Thyroid gland (tissue), 4 donors: ENCODE measurements at regions of chr5 and their contacts with region 1.

Region 1: DNA sequence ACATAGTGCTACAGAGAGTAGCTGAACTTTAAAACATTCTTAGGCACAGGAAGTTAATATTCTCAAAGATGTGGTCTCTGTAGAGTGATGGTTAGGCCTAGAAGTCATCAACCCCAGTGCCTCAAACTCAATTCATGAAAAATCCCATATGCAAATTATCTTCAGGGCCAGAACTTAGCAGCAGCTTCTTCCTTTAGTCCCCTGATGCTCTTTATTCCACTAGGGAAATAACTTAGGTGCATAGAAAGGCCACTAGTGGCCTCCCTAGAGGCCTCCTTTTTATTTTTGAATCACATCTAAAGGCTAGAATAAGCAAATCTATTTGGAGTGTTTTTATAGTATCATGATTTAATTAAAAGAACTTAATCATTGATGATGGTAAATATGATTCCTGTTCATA is 88.3 kb downstream of the GIN1 start:
- DNase-seq: no peak
- H3K4me3 ChIP-seq: no peak overlapping the region
- H3K27ac ChIP-seq: no peak overlapping the region
- H3K4me1 ChIP-seq: no peaks in the 10 kb centered on the region
- H3K27me3 ChIP-seq: no peaks in the 10 kb centered on the region
- CTCF ChIP-seq: peak in 1 of 6 experiments; percentile 13
- POLR2A ChIP-seq: no peak

Region 2: DNA sequence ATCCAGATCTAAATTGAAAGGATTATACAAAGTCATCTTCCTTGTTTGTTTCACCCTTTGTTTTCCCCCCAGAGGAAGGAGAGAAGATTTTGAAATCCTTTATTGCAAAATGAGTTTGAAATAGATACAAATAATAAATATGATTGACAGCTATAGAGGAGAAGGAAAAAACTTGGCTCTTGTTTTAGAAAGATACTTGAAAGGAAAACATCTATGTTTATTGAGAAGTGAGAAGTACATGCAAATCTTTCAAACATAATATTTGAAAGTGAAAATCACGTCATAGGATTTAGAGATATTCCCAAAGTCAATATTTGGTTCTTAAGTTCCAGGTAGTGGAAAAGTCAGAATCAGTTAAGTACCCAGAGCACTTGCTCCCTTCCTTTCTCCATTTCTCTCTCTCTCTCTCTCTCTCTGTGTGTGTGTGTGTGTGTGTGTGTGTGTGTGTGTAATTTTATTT is 249.3 kb before region 1 on chr5:
- intact Hi-C with region 1: loop called (anchors 10 kb)
- DNase-seq: no peak
- H3K4me3 ChIP-seq: no peak overlapping the region
- H3K27ac ChIP-seq: no peak overlapping the region
- H3K4me1 ChIP-seq: peaks cover 0 to 3% of the 10 kb centered on the region in 2 donors
- H3K27me3 ChIP-seq: no peaks in the 10 kb centered on the region
- CTCF ChIP-seq: no peak
- POLR2A ChIP-seq: no peak